ENCODE measurements at regions of chr3 and their contacts with region 1.

Region 1: GRCh38 chr3:67654099-67654843 is at the start of gene SUCLG2:
- DNase-seq: peak; percentile 56
- ATAC-seq: peak; percentile 92
- H3K4me3 ChIP-seq: peak within 1 kb of the TSS; percentile 77
- H3K27ac ChIP-seq: peak within 1 kb of the TSS; percentile 77
- H3K4me1 ChIP-seq: peaks cover 20% of the 10 kb centered on the region
- H3K27me3 ChIP-seq: no peaks in the 10 kb centered on the region
- CTCF ChIP-seq: no peak
- total RNA-seq, gene SUCLG2: 20.2 and 22.3 TPM in 2 replicates

Region 2: GRCh38 chr3:67624078-67624477 is 30.2 kb before region 1 on chr3:
- CTCF ChIA-PET with region 1: no interaction called
- POLR2A ChIA-PET with region 1: no interaction called
- intact Hi-C with region 1: no loop called
- DNase-seq: no peak
- ATAC-seq: no peak
- H3K4me3 ChIP-seq: no peak overlapping the region
- H3K27ac ChIP-seq: no peak overlapping the region
- H3K4me1 ChIP-seq: no peaks in the 10 kb centered on the region
- H3K27me3 ChIP-seq: no peaks in the 10 kb centered on the region
- CTCF ChIP-seq: no peak

Region 3: DNA sequence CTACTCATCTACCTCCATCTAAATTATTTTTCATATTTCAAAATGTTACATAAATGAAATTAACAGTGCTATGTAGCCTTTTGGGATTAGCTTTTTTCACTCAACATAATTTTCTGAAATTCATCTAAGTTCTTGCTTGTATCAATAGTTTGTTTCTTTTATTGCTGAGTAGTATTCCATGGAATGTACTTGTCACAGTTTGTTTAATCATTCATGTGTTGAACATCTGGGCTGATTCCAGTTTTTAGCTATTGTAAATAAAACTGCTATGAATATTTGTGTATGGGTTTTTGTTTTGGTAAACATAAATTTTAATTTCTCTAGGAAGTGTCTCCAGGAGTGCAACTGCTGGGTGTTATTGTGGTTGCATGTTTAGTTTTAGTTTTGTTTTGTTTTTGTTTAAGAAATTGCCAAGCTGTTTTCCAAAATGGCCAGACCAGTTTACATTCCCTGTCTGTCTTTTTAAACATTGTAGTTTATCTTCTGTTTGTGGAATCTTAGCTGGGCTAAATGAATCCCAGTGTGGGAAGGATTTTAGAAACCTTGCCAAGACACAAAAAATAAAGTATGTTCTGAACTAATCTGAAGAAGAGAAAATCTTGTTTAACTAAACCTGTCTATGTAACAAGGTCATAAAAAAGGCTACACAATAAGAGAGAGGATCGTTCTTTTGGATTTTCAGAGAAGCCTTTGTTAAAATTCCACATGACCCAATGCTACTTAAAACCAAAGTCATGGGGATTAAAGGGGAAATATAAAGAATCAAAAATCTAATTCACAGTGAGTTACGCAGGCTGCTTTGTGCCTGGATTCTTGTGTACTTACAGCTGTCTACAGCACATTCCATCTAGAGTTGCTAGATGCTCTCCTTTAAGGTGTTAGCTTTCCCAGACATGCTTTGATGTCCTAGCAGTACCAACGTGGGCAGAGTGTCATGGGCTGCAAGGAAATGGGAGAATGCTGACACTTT is 129.3 kb after region 1 on chr3:
- CTCF ChIA-PET with region 1: no interaction called
- POLR2A ChIA-PET with region 1: no interaction called
- intact Hi-C with region 1: loop called (anchors 5 kb)
- DNase-seq: peak; percentile 57
- ATAC-seq: peak; percentile 78
- H3K4me3 ChIP-seq: no peak overlapping the region
- H3K27ac ChIP-seq: peak overlapping the region; percentile 49
- H3K4me1 ChIP-seq: peaks cover 15% of the 10 kb centered on the region
- H3K27me3 ChIP-seq: no peaks in the 10 kb centered on the region
- CTCF ChIP-seq: no peak